Natural killer cell (primary cell): ENCODE measurements at regions of chr17 and their contacts with region 1.

Region 1: GRCh38 chr17:42527273-42527703 is 8.8 kb upstream of the NAGLU start:
- DNase-seq: peak; percentile 55 to 85
- ATAC-seq: peak; percentile 63 to 70 (median 63)
- H3K4me3 ChIP-seq: no peak overlapping the region
- H3K4me3 Mint-ChIP-seq: peak overlapping the region; percentile 51
- H3K27ac ChIP-seq: no peak overlapping the region
- H3K27ac Mint-ChIP-seq: peak overlapping the region; percentile 15 to 52
- H3K4me1 ChIP-seq: peaks cover 41% of the 10 kb centered on the region
- H3K4me1 Mint-ChIP-seq: peaks cover 23 to 43% of the 10 kb centered on the region in 2 donors
- H3K27me3 ChIP-seq: no peaks in the 10 kb centered on the region
- H3K27me3 Mint-ChIP-seq: peaks cover 0 to 5% of the 10 kb centered on the region in 2 donors
- CTCF ChIP-seq: peak; percentile 75

Region 2: GRCh38 chr17:42312285-42313130 is 214.8 kb before region 1 on chr17:
- intact Hi-C with region 1: no loop called
- DNase-seq: peak; percentile 61 to 90
- ATAC-seq: peak; percentile 82
- H3K4me3 ChIP-seq: no peak overlapping the region
- H3K4me3 Mint-ChIP-seq: peak overlapping the region; percentile 35
- H3K27ac ChIP-seq: no peak overlapping the region
- H3K27ac Mint-ChIP-seq: peak overlapping the region; percentile 61 to 65
- H3K4me1 ChIP-seq: peaks cover 38% of the 10 kb centered on the region
- H3K4me1 Mint-ChIP-seq: peaks cover 7 to 32% of the 10 kb centered on the region in 2 donors
- H3K27me3 ChIP-seq: no peaks in the 10 kb centered on the region
- H3K27me3 Mint-ChIP-seq: no peaks in the 10 kb centered on the region
- CTCF ChIP-seq: peak; percentile 47

Region 3: GRCh38 chr17:42322382-42323267 is 204.7 kb before region 1 on chr17:
- intact Hi-C with region 1: loop called (anchors 1 kb)
- DNase-seq: peak; percentile 91 to 98
- ATAC-seq: peak; percentile 99
- H3K4me3 ChIP-seq: no peak overlapping the region
- H3K4me3 Mint-ChIP-seq: no peak overlapping the region
- H3K27ac ChIP-seq: no peak overlapping the region
- H3K27ac Mint-ChIP-seq: peak overlapping the region in 1 of 2 donors; percentile 31
- H3K4me1 ChIP-seq: peaks cover 14% of the 10 kb centered on the region
- H3K4me1 Mint-ChIP-seq: peaks cover 14 to 20% of the 10 kb centered on the region in 2 donors
- H3K27me3 ChIP-seq: no peaks in the 10 kb centered on the region
- H3K27me3 Mint-ChIP-seq: no peaks in the 10 kb centered on the region
- CTCF ChIP-seq: peak; percentile 100

Region 4: GRCh38 chr17:42365136-42365535 is 162.2 kb before region 1 on chr17:
- intact Hi-C with region 1: no loop called
- DNase-seq: no peak
- ATAC-seq: peak in 1 of 3 donors; percentile 27
- H3K4me3 ChIP-seq: no peak overlapping the region
- H3K4me3 Mint-ChIP-seq: no peak overlapping the region
- H3K27ac ChIP-seq: no peak overlapping the region
- H3K27ac Mint-ChIP-seq: peak overlapping the region in 1 of 2 donors; percentile 66
- H3K4me1 ChIP-seq: peaks cover 69% of the 10 kb centered on the region
- H3K4me1 Mint-ChIP-seq: peaks cover 76 to 84% of the 10 kb centered on the region in 2 donors
- H3K27me3 ChIP-seq: no peaks in the 10 kb centered on the region
- H3K27me3 Mint-ChIP-seq: no peaks in the 10 kb centered on the region
- CTCF ChIP-seq: no peak

Region 5: DNA sequence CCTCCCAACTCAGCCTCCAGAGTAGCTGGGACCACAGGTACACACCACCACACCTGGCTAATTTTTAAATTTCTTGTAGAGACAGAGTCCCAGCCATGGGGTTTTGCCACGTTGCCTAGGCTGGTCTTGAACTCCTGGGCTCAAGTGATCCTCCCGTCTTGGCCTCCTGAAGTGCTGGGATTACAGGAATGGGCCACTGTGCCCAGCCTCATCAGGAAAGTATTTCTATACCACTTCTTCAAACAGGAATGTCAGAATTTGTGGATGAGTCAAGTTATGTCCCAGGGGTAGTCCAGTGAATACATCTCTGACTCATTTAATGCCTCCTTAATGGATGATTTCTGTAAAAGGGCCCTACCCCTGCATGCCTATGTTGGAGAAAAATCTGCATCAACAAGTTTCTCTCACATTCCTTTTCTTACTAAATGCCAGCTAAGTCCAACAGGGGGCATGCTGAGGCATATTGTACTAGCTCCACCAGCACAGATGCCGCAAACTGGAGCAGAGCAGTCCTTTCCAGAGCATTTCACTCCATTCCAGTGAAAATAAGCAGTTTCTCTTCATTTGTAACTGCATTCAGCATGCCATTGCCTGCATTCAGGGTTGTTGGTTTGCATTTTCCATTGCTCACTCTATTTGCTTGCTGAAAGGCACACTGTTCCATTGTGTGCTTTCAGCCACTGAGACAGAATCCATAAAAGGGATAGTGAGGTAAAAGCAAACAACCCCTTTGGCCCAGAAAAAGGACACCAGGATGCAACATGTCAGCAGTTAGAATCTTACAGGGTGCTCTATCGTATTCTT is 98.9 kb before region 1 on chr17:
- intact Hi-C with region 1: loop called (anchors 1 kb)
- DNase-seq: peak in 1 of 2 donors; percentile 77
- ATAC-seq: peak; percentile 66 to 80 (median 76)
- H3K4me3 ChIP-seq: no peak overlapping the region
- H3K4me3 Mint-ChIP-seq: no peak overlapping the region
- H3K27ac ChIP-seq: no peak overlapping the region
- H3K27ac Mint-ChIP-seq: no peak overlapping the region
- H3K4me1 ChIP-seq: peaks cover under 1% of the 10 kb centered on the region
- H3K4me1 Mint-ChIP-seq: peaks cover 0 to 4% of the 10 kb centered on the region in 2 donors
- H3K27me3 ChIP-seq: peaks cover 13% of the 10 kb centered on the region
- H3K27me3 Mint-ChIP-seq: peaks cover 21 to 27% of the 10 kb centered on the region in 2 donors
- CTCF ChIP-seq: peak; percentile 51

Region 6: DNA sequence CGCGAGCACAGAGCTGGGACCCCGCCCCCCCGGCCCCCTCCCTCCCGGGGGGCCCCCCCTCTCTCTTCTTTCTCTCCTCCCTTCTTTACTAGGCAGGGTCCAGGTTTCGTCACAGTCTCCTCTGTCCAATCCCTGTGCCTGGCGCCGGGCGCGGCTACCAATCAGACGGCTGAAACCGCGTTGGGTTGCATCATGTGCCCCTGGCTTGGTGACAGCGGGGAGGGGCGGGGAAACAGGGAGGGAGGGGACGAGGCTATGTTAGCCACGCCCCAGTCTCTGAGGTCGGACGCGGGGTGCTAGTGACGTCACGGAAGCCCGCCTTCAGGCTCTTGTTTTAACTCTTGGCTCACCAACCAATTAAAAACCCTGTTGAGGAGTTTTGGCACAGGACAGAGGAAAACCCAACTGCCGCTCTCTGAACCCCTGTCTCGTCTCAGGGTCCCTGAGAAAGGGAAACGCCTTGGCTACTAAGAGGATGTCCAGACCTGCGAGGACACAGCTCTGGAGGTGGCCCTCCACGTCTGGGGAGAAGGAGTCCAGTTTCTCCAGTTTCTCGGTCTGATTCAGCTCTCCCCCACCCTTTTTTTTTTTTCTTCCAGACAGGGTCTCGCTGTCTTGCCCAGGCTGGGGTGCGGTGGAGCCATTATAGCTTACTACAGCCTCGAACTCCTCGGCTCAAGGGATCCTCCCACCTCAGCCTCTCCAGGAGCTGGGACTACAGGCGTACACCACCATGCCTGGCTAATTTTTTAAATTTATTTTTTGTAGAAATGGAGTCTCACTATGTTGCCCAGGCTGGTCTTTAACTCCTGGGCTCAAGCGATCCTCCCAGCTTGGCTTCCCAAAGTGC is 149.9 kb after region 1 on chr17:
- intact Hi-C with region 1: no loop called
- DNase-seq: peak; percentile 88 to 99
- ATAC-seq: peak; percentile 79 to 92 (median 85)
- H3K4me3 ChIP-seq: peak overlapping the region; percentile 52
- H3K4me3 Mint-ChIP-seq: peak overlapping the region; percentile 94
- H3K27ac ChIP-seq: no peak overlapping the region
- H3K27ac Mint-ChIP-seq: peak overlapping the region; percentile 74 to 81
- H3K4me1 ChIP-seq: peaks cover 80% of the 10 kb centered on the region
- H3K4me1 Mint-ChIP-seq: peaks cover 20 to 54% of the 10 kb centered on the region in 2 donors
- H3K27me3 ChIP-seq: peaks cover 50% of the 10 kb centered on the region
- H3K27me3 Mint-ChIP-seq: peaks cover 12 to 34% of the 10 kb centered on the region in 2 donors
- CTCF ChIP-seq: no peak